ENCODE measurements at regions of chr7 and their contacts with region 1.

Region 1: DNA sequence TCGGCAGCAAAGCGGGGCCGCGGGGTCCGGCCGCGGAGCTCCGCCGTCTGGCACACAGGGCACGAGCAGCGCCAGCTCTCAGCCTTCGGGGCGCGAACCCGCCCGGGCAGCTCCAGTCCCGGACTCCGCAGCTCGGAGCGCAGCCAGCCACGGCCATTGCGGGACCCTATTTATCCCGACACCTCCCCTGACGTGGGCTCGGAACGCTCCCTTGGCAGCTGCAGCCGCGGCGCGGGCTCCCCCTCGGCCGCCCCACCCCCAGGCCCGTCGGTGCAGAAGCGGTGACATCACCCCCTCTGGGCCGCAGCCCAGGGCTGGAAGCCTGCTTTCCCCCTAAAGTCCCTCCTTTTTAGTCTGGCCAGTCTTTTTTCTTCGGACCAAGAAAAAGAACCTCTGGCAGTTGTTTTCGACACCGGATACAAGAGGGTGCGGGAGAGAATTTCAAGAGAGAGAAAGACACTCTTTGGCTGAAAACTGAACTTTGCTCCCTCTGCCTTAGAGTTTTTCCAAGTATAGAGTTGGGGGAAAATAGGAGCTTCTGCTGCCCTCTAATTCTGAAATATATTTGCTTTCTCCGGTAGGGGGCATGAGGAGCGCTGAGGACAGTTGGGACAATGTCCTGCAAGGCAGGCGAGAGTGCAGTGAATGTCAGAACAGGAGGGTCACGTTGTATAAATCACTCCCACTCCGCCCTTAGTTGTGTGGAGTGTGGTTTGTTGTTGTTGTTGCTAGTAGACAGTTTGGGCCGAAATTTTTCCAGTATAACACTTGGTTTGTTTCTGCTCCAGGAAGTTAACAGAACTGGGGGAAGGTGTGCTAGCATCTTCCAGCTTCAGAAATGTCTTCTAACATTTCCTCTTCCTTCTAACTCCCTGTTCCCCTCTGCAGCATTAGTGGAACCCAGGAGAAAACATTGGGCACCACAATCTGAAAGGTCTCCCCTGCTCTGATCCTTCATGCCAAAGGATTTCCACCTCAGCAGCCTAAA is at the start of gene SFRP4:
- DNase-seq: peak; percentile 53 to 63 (median 55)
- H3K4me3 ChIP-seq: peak within 1 kb of the TSS; percentile 38 to 83 (median 63)
- H3K27ac ChIP-seq: no peak within 1 kb of the TSS
- H3K4me1 ChIP-seq: peaks cover 13 to 41% (median 36%) of the 10 kb centered on the region in 4 experiments
- H3K27me3 ChIP-seq: peaks cover 0 to 12% (median 0%) of the 10 kb centered on the region in 5 experiments

Region 2: DNA sequence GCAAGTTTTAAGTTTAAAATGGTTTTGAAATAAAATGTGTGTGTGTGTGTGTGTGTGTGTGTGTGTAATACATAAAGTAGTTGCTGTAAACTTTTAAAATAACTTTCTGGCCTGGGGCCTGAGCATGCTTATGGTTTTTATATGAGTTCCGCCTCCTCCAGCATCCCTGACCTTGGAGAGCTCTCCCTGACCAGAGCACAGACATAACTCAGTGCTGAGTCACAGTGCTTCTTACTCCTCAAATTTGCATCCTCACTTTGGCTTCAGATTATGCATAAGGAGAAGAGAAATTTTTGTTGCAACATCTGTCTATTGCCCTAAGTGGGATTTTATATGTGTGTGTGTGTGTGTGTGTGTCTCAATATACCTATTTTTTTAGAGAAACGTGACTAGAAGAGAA is 669.1 kb before region 1 on chr7:
- CTCF ChIA-PET with region 1: no interaction called
- POLR2A ChIA-PET with region 1: no interaction called
- DNase-seq: peak in 2 of 3 donors; percentile 36 to 46
- H3K4me3 ChIP-seq: no peak overlapping the region
- H3K27ac ChIP-seq: no peak overlapping the region
- H3K4me1 ChIP-seq: peaks cover 0 to 3% (median 0%) of the 10 kb centered on the region in 4 experiments
- H3K27me3 ChIP-seq: no peaks in the 10 kb centered on the region

Region 3: GRCh38 chr7:37815671-37816371 is 101.1 kb before region 1 on chr7:
- CTCF ChIA-PET with region 1: no interaction called
- POLR2A ChIA-PET with region 1: no interaction called
- DNase-seq: no peak
- H3K4me3 ChIP-seq: no peak overlapping the region
- H3K27ac ChIP-seq: no peak overlapping the region
- H3K4me1 ChIP-seq: no peaks in the 10 kb centered on the region
- H3K27me3 ChIP-seq: no peaks in the 10 kb centered on the region

Region 4: DNA sequence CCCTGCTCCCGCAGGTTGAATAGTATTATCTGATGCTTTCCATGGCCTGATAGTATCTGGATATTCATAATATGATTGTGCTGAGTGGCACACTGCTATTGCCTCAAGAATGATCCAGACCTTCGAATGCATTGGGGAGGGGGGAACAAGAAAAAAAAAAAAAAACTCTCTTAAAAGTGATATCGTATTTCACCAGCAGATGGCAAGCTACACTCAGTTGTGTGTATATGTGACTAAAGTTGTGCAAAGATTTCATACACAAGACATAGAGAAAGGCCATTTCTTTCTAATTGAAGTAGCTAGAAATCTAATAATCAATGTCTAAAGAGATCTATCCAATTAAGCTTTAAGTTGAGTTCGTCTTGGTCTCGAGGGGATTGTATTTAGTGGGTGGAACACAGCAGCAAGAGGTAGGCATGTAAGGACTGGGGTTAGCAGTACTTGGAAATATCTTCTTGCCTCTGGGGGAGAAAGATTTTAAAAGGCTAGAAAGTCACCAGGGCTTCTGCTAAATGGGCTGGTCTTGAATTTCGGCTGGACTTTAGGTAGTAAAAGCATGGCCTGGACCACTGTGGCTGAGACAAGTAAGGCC is 15.6 kb before region 1 on chr7:
- CTCF ChIA-PET with region 1: interaction called, 59 read pairs
- POLR2A ChIA-PET with region 1: no interaction called
- DNase-seq: peak; percentile 61 to 81 (median 75)
- H3K4me3 ChIP-seq: no peak overlapping the region
- H3K27ac ChIP-seq: no peak overlapping the region
- H3K4me1 ChIP-seq: no peaks in the 10 kb centered on the region
- H3K27me3 ChIP-seq: no peaks in the 10 kb centered on the region

Region 5: DNA sequence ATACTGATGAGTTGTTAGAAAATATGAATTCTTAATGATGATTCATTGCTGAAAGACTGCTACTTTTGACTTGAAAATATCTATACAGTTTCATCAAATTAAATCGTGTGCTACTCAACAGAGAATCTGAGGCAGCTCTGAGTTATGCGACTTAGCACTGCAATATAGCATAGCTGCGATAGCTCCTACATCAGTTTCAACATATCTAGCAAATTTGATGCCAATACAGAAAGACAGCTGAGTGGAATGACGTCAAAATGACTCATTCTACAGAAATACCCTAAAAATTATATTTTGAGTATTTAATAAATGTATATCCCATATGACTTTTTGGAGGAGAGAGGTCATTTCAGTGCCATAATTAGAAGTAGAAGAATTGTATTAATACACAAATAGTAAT is 357.5 kb after region 1 on chr7:
- CTCF ChIA-PET with region 1: no interaction called
- POLR2A ChIA-PET with region 1: no interaction called
- DNase-seq: no peak
- H3K4me3 ChIP-seq: peak overlapping the region in 2 of 7 experiments; percentile 8 to 67
- H3K27ac ChIP-seq: no peak overlapping the region
- H3K4me1 ChIP-seq: peaks cover 5 to 16% (median 14%) of the 10 kb centered on the region in 4 experiments
- H3K27me3 ChIP-seq: no peaks in the 10 kb centered on the region